ENCODE measurements at regions of chr16 and their contacts with region 1.

Region 1: DNA sequence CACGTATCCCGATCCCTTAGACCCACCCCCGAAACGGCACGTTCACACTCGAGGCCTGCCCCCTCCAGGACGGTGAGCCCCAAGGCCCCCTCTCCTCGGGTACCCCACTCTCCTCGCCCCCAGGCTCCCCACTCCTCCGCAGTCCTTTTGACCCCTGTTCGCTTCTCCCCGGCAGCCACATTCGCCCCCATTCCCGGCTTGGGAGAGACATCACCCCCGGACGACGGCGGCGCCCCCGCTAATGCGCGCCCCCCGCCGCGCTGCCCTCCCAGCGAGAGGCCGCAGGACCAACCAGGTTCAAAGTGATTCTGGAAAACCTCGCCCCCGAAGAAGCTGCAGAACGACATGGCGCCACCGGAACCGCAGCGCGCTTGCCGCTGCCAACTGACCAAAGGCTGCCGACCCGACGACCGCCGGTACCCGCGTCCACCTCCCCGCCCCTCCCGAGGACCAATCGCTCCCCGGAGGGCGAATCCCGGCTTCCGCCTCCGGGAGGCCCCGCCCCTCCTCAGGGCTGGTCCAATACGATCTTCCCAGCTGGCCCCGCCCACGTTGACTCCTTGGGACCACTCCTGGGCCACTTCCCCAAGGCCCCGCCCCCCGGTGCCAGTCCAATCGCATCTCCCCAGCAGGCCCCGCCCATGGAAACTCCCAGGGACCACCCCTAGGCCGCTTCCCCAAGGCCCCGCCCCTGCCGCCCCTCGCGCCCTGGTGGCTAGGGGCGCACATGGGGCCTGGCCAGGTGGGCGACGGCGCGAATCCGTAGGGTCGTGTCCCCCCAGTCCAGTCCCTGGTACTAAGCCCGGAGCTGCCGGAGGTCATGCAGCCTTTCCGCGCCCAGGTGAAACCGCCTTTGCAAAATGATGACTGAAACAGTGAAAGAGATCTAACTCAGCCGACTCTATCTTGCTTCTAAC is at the start of gene MSRB1:
- DNase-seq: peak; percentile 97 to 100 (median 98)
- ATAC-seq: peak; percentile 100
- H3K4me3 ChIP-seq: peak within 1 kb of the TSS; percentile 90
- H3K4me3 Mint-ChIP-seq: peak within 1 kb of the TSS; percentile 74 to 90 (median 87)
- H3K27ac ChIP-seq: peak within 1 kb of the TSS; percentile 76
- H3K27ac Mint-ChIP-seq: peak within 1 kb of the TSS; percentile 41 to 90 (median 65)
- H3K4me1 ChIP-seq: peaks cover 6 to 7% of the 10 kb centered on the region in 2 donors
- H3K4me1 Mint-ChIP-seq: peaks cover 4 to 24% (median 11%) of the 10 kb centered on the region in 7 donors
- H3K27me3 ChIP-seq: no peaks in the 10 kb centered on the region
- H3K27me3 Mint-ChIP-seq: no peaks in the 10 kb centered on the region
- total RNA-seq, gene MSRB1: 5.5 to 27.0 (median 8.2) TPM

Region 2: DNA sequence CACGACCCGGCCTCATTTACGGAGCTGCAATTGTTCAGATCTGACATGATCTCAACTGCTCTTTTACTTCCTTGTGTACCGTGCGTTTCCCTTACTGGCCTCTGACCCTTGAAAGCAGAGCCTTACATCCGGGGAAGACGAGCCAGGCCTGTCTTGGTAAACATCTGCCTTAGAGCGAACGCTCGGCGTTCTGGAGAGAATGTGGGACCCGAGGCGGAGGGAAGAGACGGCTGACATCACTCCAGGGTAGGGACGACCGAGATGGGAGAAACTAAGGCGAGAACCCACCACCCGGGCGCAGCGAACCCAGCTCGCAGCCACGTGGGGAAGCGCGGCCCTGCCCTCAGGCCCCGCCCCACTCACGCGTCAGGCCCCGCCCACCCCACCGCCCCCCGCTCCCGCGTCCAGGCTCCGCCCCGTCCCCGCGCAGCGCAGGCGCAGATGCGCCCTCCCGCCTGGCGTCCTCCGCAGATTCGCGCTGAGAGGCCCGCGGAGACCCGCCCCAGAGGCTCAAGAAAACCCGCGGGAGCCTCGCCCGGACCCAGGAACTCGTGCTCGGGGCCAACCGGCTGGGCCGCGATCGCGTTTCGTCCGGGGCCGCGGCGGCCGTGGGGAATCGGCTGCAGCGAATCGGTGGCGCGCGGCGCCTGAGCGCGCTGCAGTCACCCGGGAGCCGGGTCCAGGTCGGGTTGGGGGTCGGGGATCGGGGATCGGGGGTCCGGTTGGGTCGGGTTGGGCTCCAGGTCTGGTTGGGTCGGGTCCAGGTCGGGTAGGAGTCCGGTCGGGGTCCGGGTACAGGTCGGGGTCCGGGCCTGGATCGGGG is 449.9 kb before region 1 on chr16 and contains the start of gene TELO2:
- CTCF ChIA-PET with region 1: no interaction called
- POLR2A ChIA-PET with region 1: no interaction called
- intact Hi-C with region 1: loop called in 1 of 2 experiments (anchors 5 kb)
- DNase-seq: peak; percentile 82 to 96 (median 90)
- ATAC-seq: peak; percentile 96
- H3K4me3 ChIP-seq: peak within 1 kb of the TSS; percentile 59
- H3K4me3 Mint-ChIP-seq: peak within 1 kb of the TSS; percentile 83 to 99 (median 94)
- H3K27ac ChIP-seq: peak within 1 kb of the TSS; percentile 88
- H3K27ac Mint-ChIP-seq: peak within 1 kb of the TSS; percentile 97 to 100 (median 99)
- H3K4me1 ChIP-seq: peaks cover 12 to 17% of the 10 kb centered on the region in 2 donors
- H3K4me1 Mint-ChIP-seq: peaks cover 9 to 20% (median 12%) of the 10 kb centered on the region in 7 donors
- H3K27me3 ChIP-seq: no peaks in the 10 kb centered on the region
- H3K27me3 Mint-ChIP-seq: no peaks in the 10 kb centered on the region
- total RNA-seq, gene TELO2: 46.9 to 58.9 (median 50.3) TPM

Region 3: GRCh38 chr16:1929578-1930337 is 13.3 kb before region 1 on chr16:
- CTCF ChIA-PET with region 1: interaction called, 4 read pairs
- POLR2A ChIA-PET with region 1: interaction called, 3 read pairs
- intact Hi-C with region 1: loop called in 1 of 2 experiments (anchors 1 kb)
- DNase-seq: peak; percentile 83 to 99 (median 91)
- ATAC-seq: peak; percentile 100
- H3K4me3 ChIP-seq: peak overlapping the region; percentile 48
- H3K4me3 Mint-ChIP-seq: peak overlapping the region in 6 of 10 donors; percentile 30 to 82 (median 74)
- H3K27ac ChIP-seq: peak overlapping the region; percentile 64
- H3K27ac Mint-ChIP-seq: no peak overlapping the region
- H3K4me1 ChIP-seq: no peaks in the 10 kb centered on the region
- H3K4me1 Mint-ChIP-seq: peaks cover 2 to 8% (median 4%) of the 10 kb centered on the region in 7 donors
- H3K27me3 ChIP-seq: no peaks in the 10 kb centered on the region
- H3K27me3 Mint-ChIP-seq: peaks cover 0 to 3% (median 2%) of the 10 kb centered on the region in 5 donors

Region 4: DNA sequence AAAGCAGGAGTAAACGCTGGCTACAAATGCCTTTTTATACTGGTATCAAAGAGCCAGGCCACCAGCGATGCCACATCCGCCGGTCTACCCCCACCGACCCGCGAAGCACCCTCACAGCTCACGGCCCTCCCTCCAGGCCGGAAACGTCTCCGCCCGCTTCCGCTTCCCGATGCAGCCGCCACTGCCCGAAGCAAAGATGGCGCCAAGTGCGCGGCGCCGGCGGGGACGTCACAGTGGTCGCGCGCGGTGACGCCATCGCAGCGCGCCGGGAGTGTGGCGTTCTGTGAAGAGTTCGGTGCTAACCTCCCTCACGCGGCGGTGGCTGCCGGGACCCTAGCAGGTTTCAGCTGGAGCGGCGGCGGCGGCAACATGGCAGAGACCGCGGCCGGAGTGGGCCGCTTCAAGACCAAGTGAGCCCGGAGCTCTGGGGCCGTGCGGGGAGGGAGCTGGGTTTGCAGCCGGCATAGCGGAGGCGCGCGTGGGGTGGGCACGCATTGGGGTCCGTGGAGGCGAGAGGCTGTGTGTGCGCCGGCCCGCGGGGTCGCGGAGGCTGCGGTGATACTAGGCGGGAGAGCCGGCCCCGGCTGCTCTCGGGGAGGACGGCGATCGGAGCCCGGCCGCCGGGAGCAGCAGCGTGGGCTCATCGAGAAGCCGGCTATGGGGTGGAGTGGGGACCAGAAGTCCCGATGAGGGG is 28.9 kb after region 1 on chr16 and contains the start of gene TBL3:
- CTCF ChIA-PET with region 1: no interaction called
- POLR2A ChIA-PET with region 1: interaction called, 4 read pairs
- intact Hi-C with region 1: loop called (anchors 1 kb)
- DNase-seq: peak; percentile 95 to 99 (median 98)
- ATAC-seq: peak; percentile 97
- H3K4me3 ChIP-seq: peak within 1 kb of the TSS; percentile 81
- H3K4me3 Mint-ChIP-seq: peak within 1 kb of the TSS; percentile 87 to 98 (median 95)
- H3K27ac ChIP-seq: peak within 1 kb of the TSS; percentile 89
- H3K27ac Mint-ChIP-seq: peak within 1 kb of the TSS; percentile 93 to 100 (median 98)
- H3K4me1 ChIP-seq: peaks cover 7 to 18% of the 10 kb centered on the region in 2 donors
- H3K4me1 Mint-ChIP-seq: peaks cover 16 to 27% (median 20%) of the 10 kb centered on the region in 7 donors
- H3K27me3 ChIP-seq: no peaks in the 10 kb centered on the region
- H3K27me3 Mint-ChIP-seq: peaks cover 0 to 4% (median 0%) of the 10 kb centered on the region in 5 donors
- total RNA-seq, gene TBL3: 17.2 to 45.2 (median 27.6) TPM

Region 5: GRCh38 chr16:2058872-2059271 is 115.8 kb after region 1 on chr16:
- CTCF ChIA-PET with region 1: no interaction called
- POLR2A ChIA-PET with region 1: no interaction called
- intact Hi-C with region 1: no loop called
- DNase-seq: no peak
- ATAC-seq: no peak
- H3K4me3 ChIP-seq: no peak overlapping the region
- H3K4me3 Mint-ChIP-seq: no peak overlapping the region
- H3K27ac ChIP-seq: no peak overlapping the region
- H3K27ac Mint-ChIP-seq: no peak overlapping the region
- H3K4me1 ChIP-seq: no peaks in the 10 kb centered on the region
- H3K4me1 Mint-ChIP-seq: no peaks in the 10 kb centered on the region
- H3K27me3 ChIP-seq: no peaks in the 10 kb centered on the region
- H3K27me3 Mint-ChIP-seq: no peaks in the 10 kb centered on the region

Region 6: GRCh38 chr16:2513405-2514322 is 570.6 kb after region 1 on chr16 and contains the start of gene ATP6V0C:
- CTCF ChIA-PET with region 1: no interaction called
- POLR2A ChIA-PET with region 1: no interaction called
- intact Hi-C with region 1: loop called in 1 of 2 experiments (anchors 1 kb)
- DNase-seq: peak; percentile 89 to 98 (median 94)
- ATAC-seq: peak; percentile 87
- H3K4me3 ChIP-seq: peak within 1 kb of the TSS; percentile 71
- H3K4me3 Mint-ChIP-seq: peak within 1 kb of the TSS; percentile 85 to 94 (median 91)
- H3K27ac ChIP-seq: peak within 1 kb of the TSS; percentile 100
- H3K27ac Mint-ChIP-seq: peak within 1 kb of the TSS; percentile 90 to 98 (median 96)
- H3K4me1 ChIP-seq: peaks cover 31 to 44% of the 10 kb centered on the region in 2 donors
- H3K4me1 Mint-ChIP-seq: peaks cover 36 to 60% (median 48%) of the 10 kb centered on the region in 7 donors
- H3K27me3 ChIP-seq: no peaks in the 10 kb centered on the region
- H3K27me3 Mint-ChIP-seq: peaks cover 0 to 3% (median 0%) of the 10 kb centered on the region in 5 donors
- total RNA-seq, gene ATP6V0C: 98.2 to 303 (median 113) TPM

Region 7: DNA sequence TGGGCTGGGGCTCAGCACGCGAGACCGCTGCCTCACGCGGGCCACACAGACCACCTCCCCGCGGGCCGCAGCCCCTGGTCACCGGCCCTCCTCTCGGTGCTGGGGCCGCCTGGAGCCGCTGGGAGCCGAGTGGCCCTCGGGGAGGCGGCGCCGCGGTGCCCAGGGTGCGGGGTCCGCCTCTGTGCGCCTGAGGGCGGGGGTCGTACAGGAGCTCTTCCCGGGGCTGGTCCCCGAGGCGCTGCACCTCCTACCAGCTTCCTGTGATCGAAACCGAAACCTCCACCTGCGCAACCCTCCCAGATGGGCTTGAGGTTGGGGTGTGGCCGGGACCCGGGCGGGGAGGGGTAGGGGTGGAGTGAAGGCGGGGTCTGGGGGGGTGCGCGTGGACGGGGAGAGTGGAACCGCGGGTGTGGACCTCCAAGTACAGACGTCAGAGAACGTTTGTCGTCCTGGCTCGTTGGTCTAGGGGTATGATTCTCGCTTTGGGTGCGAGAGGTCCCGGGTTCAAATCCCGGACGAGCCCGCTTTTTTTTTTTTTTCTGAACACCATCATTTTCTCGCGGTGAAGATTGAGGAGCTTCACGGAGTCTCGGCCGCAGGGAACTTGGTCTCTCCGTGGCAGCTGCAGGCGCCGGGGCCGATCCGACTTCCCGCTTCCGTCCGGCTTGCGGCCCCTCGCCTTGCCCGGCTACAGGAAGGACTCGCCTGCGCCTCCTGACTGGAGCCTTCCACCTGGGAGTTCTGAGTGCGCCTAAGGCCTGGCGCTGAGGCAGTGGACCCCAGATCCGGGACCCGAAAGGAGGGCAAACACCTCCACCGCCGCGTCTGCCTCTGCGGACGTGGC is 1215.6 kb after region 1 on chr16:
- CTCF ChIA-PET with region 1: no interaction called
- POLR2A ChIA-PET with region 1: no interaction called
- intact Hi-C with region 1: no loop called
- DNase-seq: peak; percentile 80 to 98 (median 91)
- ATAC-seq: peak; percentile 97
- H3K4me3 ChIP-seq: peak overlapping the region; percentile 86
- H3K4me3 Mint-ChIP-seq: peak overlapping the region; percentile 87 to 94 (median 92)
- H3K27ac ChIP-seq: peak overlapping the region; percentile 86
- H3K27ac Mint-ChIP-seq: peak overlapping the region; percentile 90 to 99 (median 95)
- H3K4me1 ChIP-seq: peaks cover 5 to 9% of the 10 kb centered on the region in 2 donors
- H3K4me1 Mint-ChIP-seq: peaks cover 10 to 42% (median 28%) of the 10 kb centered on the region in 7 donors
- H3K27me3 ChIP-seq: no peaks in the 10 kb centered on the region
- H3K27me3 Mint-ChIP-seq: peaks cover 0 to 26% (median 0%) of the 10 kb centered on the region in 5 donors

Measured in naive thymus-derived CD4-positive, alpha-beta T cell (primary cell).